HepG2 (cell line): ENCODE measurements at regions of chr4 and their contacts with region 1.

Region 1: DNA sequence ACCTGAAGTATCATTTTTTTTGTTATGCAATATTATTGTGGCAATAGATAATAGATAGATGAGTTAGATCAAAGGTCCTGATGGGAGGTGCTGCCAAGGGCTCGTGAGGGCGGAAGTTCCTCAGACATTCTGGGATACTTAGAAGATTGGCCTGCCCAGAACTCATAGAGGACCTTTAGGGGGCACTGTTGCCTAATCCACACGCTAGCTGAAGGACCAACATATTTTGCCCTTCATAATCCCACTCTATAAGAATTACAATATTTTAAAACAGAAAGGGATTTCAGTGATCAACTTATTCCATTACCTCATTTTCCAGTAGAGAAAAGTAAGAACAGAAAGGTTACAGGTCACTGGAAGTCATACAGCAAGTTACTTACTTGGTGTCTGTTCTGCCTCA is 22.9 kb upstream of the COX7B2 start:
- DNase-seq: peak; percentile 3
- ATAC-seq: peak; percentile 86
- H3K4me3 ChIP-seq: no peak overlapping the region
- H3K27ac ChIP-seq: no peak overlapping the region
- H3K4me1 ChIP-seq: 0 out of 2 replicates have a peak, but pooled peaks cover 9% of the 10 kb centered on the region
- H3K27me3 ChIP-seq: no peaks in the 10 kb centered on the region
- CTCF ChIP-seq: peak; percentile 58
- EP300 ChIP-seq: no peak
- POLR2A ChIP-seq: no peak
- RAD21 ChIP-seq: no peak

Region 2: DNA sequence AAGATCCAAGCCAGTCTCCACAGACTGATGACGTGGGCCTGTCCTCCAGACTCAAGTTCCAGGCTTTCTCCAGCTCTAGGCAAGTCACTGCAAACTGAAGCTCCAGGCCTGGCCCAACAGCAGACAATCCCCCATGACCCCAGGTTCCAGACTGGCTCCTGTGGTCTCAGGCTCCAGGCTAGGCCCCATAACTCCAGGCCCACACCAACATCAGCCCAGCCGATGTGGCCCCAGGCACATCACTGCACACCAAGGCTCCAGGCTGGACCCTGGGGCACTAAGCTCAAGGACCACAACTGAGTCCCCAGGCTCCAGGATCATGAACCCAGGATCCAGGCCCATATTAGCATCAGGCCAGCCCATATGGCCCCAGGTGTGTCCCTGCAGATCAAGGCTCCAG is 166.5 kb before region 1 on chr4:
- CTCF ChIA-PET with region 1: no interaction called
- POLR2A ChIA-PET with region 1: no interaction called
- in situ Hi-C with region 1: no loop called
- intact Hi-C with region 1: no loop called
- DNase-seq: no peak
- ATAC-seq: no peak
- H3K4me3 ChIP-seq: no peak overlapping the region
- H3K27ac ChIP-seq: no peak overlapping the region
- H3K4me1 ChIP-seq: no peaks in the 10 kb centered on the region
- H3K27me3 ChIP-seq: no peaks in the 10 kb centered on the region
- CTCF ChIP-seq: no peak
- EP300 ChIP-seq: no peak
- POLR2A ChIP-seq: no peak
- RAD21 ChIP-seq: no peak

Region 3: GRCh38 chr4:46818604-46819003 is 113.4 kb before region 1 on chr4:
- CTCF ChIA-PET with region 1: no interaction called
- POLR2A ChIA-PET with region 1: no interaction called
- in situ Hi-C with region 1: no loop called
- intact Hi-C with region 1: no loop called
- DNase-seq: no peak
- ATAC-seq: no peak
- H3K4me3 ChIP-seq: no peak overlapping the region
- H3K27ac ChIP-seq: no peak overlapping the region
- H3K4me1 ChIP-seq: no peaks in the 10 kb centered on the region
- H3K27me3 ChIP-seq: no peaks in the 10 kb centered on the region
- CTCF ChIP-seq: no peak
- EP300 ChIP-seq: no peak
- POLR2A ChIP-seq: no peak
- RAD21 ChIP-seq: no peak

Region 4: DNA sequence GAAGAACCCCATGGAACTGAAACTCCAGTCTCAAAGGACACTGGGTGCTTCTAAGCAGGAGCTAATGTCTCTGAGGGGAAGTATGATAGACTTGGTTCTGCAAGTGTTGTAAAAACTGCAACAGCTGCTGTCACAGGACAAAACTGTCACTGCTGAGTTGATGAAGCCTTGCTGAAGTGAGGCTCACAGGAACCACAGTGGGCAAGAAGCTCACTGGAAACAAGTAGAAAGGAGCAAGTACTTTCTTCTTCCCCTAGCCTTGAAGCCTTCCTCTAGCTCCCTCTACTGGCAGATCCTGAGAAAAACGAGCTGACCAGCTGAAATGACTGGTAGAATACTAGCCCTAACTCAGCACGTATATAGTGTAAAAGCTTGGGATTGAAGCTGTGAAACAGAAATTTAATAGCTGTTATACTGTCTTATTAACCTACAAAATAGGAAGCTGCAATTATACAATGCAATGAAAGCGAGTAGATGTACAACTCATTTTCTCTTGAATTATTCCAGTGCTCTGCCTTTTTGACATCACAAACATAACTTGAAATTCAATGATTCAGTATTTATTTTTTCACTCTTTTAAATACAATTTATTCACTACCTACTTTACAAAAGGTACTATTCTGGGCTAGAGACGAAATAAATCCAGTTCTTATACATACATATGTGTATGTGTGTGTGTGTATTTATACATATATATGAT is 190.8 kb after region 1 on chr4:
- CTCF ChIA-PET with region 1: no interaction called
- POLR2A ChIA-PET with region 1: no interaction called
- in situ Hi-C with region 1: no loop called
- intact Hi-C with region 1: loop called (anchors 2 kb)
- DNase-seq: peak; percentile 63
- ATAC-seq: peak; percentile 93
- H3K4me3 ChIP-seq: no peak overlapping the region
- H3K27ac ChIP-seq: no peak overlapping the region
- H3K4me1 ChIP-seq: no peaks in the 10 kb centered on the region
- H3K27me3 ChIP-seq: no peaks in the 10 kb centered on the region
- CTCF ChIP-seq: peak; percentile 81
- EP300 ChIP-seq: no peak
- POLR2A ChIP-seq: no peak
- RAD21 ChIP-seq: no peak